ENCODE measurements at regions of chr20 and their contacts with region 1.

Region 1: DNA sequence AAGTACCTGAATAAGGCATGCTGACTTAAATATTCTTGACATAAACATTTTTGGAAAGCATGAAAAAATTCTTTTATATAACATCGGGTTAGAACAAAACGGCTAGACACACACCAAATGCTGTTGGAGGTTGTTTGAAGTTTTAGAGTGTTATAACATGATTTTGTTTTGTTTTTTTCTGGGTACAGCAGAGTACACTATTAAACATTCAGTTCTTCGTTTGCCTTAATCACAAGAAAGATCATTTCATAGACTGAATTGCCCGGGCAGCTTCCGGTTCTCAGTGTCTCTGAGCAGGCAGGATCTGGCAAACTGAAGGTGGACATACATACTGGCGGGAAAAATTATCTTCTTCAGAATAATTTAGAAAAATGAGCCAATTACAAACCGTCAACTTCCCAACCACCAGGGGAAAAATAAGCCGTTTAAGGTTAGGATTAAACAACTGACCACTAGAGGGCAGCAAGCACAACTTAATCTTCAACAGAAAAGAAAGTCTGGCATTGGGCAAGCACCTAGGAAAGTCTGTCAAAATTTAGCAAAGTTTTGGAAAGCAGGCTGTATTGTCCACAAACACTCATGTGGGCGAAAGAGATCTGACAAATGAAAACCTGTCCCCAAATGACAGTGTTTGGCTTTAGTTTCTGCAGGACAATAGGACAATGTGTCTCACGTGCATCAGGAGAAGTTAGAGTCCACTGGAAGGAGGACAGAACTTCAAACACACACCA is 15.0 kb downstream of the ZNF217 start:
- DNase-seq: no peak
- ATAC-seq: peak; percentile 73 to 90 (median 77)
- H3K4me3 ChIP-seq: peak overlapping the region; percentile 3
- H3K27ac ChIP-seq: no peak overlapping the region
- H3K4me1 ChIP-seq: peaks cover 35% of the 10 kb centered on the region
- H3K27me3 ChIP-seq: no peaks in the 10 kb centered on the region
- CTCF ChIP-seq: peak; percentile 85

Region 2: DNA sequence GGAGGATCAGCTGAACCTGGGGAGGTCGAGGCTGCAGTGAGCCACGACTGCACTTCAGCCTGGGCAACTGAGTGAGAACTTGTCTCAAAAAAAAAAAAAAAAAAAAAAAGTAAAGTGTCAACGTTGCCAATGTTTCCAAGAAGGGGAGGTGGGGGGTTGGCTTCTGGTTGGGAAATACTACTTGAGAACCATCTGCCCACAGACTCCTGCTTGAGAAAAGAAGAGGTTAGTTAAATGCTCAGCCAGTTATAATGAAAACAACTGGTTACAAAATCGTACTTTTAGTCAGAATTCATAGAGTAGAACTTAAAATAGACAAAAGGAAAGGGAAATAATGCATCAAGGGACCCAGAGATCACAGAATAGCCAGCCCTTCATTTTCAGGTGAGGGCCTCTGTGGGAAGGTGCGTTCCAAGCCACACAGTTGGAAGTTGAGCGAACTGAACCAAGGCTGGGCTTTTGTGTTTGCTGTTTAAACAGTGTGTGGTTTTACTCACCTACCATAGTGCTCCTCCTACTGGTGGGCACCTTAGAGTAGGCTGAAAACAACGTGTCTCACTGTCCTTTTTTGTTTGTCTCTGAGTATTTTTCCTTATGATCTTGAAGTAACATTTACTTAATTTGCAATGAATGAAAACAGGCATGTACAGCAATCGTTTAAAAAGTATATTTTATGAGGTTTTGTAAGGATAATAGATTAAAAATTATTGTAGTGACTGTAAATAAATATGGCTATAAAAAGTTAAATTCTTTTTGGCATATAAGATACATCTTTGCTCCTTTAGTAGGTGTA is 291.0 kb after region 1 on chr20:
- intact Hi-C with region 1: loop called in 1 of 2 experiments (anchors 2 kb)
- DNase-seq: peak in 1 of 2 donors; percentile 31
- ATAC-seq: peak; percentile 65 to 80 (median 74)
- H3K4me3 ChIP-seq: no peak overlapping the region
- H3K27ac ChIP-seq: no peak overlapping the region
- H3K4me1 ChIP-seq: peaks cover 8% of the 10 kb centered on the region
- H3K27me3 ChIP-seq: no peaks in the 10 kb centered on the region
- CTCF ChIP-seq: peak; percentile 66

Region 3: DNA sequence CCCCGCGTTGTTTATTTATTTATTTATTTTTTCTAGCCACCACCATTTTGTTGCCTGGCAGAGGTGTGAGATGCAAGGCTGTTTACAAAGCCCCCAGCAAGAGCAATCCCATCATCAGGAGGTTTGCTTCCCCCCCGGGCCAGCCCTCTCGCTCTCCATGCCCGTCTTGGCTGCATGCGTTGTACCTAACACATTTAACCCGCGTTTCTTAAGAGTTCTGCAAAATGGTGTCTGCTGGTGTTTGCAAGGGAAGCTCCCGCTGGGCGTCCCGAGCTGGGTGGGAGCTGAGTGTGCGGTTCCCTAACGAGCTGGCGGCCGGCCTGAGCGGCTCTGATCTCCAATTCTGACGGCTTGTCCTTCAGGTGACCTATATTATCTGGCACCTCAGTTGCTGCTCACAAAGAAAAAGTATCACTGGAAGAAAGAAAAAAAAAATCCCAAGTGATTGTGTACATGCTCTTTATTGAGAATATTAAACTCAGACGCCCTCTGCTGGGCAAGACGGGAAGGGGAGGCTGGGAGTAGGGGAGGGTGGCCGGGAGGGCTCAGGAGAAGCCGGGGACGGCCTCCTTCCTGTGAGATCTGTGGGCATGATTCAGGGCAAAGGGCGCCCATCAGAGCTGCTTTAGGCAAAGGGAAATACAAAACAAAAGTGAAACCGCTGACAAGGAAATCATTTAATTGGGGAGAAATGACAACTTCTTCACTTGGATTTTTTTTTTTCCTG is 337.0 kb after region 1 on chr20:
- intact Hi-C with region 1: loop called (anchors 1 to 2 kb)
- DNase-seq: peak; percentile 93 to 95
- ATAC-seq: peak; percentile 94 to 96 (median 95)
- H3K4me3 ChIP-seq: peak overlapping the region; percentile 79
- H3K27ac ChIP-seq: peak overlapping the region; percentile 81
- H3K4me1 ChIP-seq: peaks cover 6% of the 10 kb centered on the region
- H3K27me3 ChIP-seq: no peaks in the 10 kb centered on the region
- CTCF ChIP-seq: peak; percentile 79

Region 4: DNA sequence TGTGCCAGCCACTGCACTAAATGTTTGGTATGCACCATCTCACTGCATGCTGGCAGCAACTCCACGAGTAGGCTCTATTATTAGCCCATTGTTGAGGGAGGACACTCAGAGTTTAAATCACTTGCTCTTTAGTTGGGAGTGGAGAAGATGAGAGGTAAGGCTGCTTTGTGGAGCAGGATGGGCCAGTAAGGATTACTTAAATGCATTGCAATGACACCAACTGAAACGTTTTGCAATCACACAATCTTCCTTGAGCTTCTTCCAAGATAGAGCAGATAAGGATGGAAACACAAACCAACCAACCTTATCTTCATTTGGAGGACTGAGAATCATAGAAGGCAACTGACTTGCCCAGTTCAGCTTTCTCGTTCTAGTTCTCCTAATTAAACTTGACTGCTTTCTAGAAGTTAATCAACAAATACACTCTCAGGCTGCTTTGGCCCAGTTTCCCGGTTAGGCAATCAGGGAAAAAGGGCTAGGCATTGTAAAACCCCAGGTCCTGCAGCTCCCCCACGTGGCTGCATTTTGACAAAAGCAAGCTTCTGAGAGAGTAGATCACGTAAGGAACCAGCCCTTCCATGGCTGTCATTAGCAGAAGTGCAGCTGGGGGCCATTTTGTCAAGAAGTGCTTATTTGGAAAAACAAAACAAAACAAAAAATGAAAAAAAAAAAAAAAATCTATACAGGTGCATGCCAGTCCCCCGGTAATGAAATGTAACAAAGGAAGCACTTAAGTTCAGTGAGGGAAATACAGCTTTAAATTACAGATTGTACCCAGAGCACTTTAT is 361.1 kb after region 1 on chr20:
- intact Hi-C with region 1: loop called (anchors 2 to 5 kb)
- DNase-seq: peak; percentile 89 to 93
- ATAC-seq: peak; percentile 85 to 96 (median 90)
- H3K4me3 ChIP-seq: peak overlapping the region; percentile 17
- H3K27ac ChIP-seq: peak overlapping the region; percentile 2
- H3K4me1 ChIP-seq: peaks cover 3% of the 10 kb centered on the region
- H3K27me3 ChIP-seq: no peaks in the 10 kb centered on the region
- CTCF ChIP-seq: peak; percentile 57

Region 5: GRCh38 chr20:54199721-54200176 is 621.1 kb after region 1 on chr20:
- intact Hi-C with region 1: loop called in 1 of 2 experiments (anchors 5 kb)
- DNase-seq: peak; percentile 67 to 79
- ATAC-seq: peak; percentile 64 to 84 (median 67)
- H3K4me3 ChIP-seq: no peak overlapping the region
- H3K27ac ChIP-seq: no peak overlapping the region
- H3K4me1 ChIP-seq: no peaks in the 10 kb centered on the region
- H3K27me3 ChIP-seq: no peaks in the 10 kb centered on the region
- CTCF ChIP-seq: peak; percentile 92